Heart right ventricle (tissue), 16 donors: ENCODE measurements at regions of chr9 and their contacts with region 1.

Region 1: DNA sequence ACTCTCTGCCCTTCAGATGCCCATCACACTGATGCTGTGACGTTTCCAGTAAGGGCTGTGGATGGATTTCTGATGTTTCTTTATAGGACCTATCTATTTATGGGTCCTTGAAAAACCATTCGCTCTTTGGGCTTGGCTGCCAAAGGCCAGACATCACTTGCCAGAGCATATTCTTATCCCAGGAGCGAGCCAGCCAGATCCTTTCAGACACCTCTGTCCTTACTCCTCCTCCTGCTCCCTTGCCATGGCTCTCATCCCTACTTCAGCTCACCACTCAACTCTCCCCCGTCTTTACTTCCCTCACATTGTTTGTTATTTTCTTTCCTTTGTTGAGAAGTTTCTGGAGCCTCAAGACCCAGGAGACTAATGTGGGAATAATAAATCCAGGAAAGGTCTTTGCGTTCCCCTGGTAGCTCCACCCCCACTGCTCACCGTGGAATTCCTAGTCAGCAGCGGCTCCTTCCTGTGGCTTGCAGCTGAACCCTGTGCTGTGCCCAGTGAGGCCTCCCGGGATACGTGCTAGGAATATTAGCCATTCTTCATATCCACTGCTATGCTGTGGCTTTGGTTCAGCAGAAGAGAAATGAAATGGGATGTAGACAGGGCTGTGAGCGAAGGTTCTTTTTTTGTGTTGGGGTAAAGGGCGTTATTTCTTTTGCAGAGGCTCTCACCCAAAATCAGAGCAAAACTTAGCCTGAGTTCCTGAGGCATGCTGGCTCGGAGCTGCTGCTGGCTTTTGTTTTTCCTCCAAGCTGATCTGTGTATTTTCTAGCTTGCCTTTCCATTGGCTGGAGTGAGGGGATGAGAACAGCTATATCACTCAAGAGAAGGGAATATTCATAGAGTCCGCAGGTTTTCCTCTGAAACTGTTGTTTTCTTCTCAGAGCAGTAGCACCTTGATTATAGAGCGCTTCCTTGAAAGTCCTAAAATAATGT is 171.1 kb downstream of the SAXO1 start:
- DNase-seq: peak; percentile 28 to 60
- ATAC-seq: peak; percentile 74 to 96 (median 88)
- H3K4me3 ChIP-seq: peak overlapping the region in 2 of 10 donors; percentile 6 to 14
- H3K27ac ChIP-seq: peak overlapping the region in 7 of 10 donors; percentile 17 to 76 (median 44)
- H3K4me1 ChIP-seq: peaks cover 7 to 25% (median 21%) of the 10 kb centered on the region in 9 donors
- H3K27me3 ChIP-seq: no peaks in the 10 kb centered on the region
- CTCF ChIP-seq: peak in 7 of 9 donors; percentile 6 to 57 (median 26)

Region 2: GRCh38 chr9:17962747-17963146 is 899.1 kb before region 1 on chr9:
- intact Hi-C with region 1: no loop called
- DNase-seq: peak in 1 of 2 donors; percentile 19
- ATAC-seq: peak in 6 of 8 donors; percentile 59 to 91 (median 78)
- H3K4me3 ChIP-seq: no peak overlapping the region
- H3K27ac ChIP-seq: peak overlapping the region in 1 of 10 donors; percentile 39
- H3K4me1 ChIP-seq: peaks cover 0 to 9% (median 0%) of the 10 kb centered on the region in 9 donors
- H3K27me3 ChIP-seq: no peaks in the 10 kb centered on the region
- CTCF ChIP-seq: no peak

Region 3: DNA sequence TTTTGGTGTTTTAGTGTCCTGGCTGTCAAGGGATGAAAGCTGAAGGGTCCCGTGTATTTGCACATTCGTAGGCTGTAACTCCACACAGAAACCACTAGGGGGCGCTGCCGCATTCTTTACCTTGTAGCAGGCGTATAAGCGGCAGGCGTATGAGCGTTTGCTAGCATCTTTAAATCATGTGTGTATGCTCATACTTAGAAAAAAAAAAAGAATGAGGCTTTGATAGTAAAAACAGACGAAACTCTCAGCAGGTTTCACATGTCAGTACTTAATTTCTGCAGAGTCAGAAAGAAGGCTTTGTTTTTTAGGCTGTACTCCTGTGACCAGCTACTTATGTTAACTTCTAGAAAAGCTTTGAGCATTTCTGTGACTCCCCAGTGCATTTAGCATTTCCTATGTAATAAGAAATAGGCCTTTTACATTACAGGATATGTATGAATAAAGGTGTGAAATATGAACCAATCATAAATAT is 606.7 kb before region 1 on chr9:
- intact Hi-C with region 1: loop called in 1 of 10 experiments (anchors 10 kb)
- DNase-seq: peak; percentile 70 to 83
- ATAC-seq: peak; percentile 47 to 91 (median 84)
- H3K4me3 ChIP-seq: no peak overlapping the region
- H3K27ac ChIP-seq: no peak overlapping the region
- H3K4me1 ChIP-seq: peaks cover 0 to 21% (median 4%) of the 10 kb centered on the region in 9 donors
- H3K27me3 ChIP-seq: no peaks in the 10 kb centered on the region
- CTCF ChIP-seq: peak; percentile 88 to 98 (median 97)

Region 4: GRCh38 chr9:18632632-18633403 is 229.1 kb before region 1 on chr9:
- intact Hi-C with region 1: no loop called
- DNase-seq: peak; percentile 15 to 41
- ATAC-seq: peak; percentile 80 to 95 (median 94)
- H3K4me3 ChIP-seq: no peak overlapping the region
- H3K27ac ChIP-seq: peak overlapping the region; percentile 12 to 80 (median 72)
- H3K4me1 ChIP-seq: peaks cover 0 to 51% (median 11%) of the 10 kb centered on the region in 9 donors
- H3K27me3 ChIP-seq: no peaks in the 10 kb centered on the region
- CTCF ChIP-seq: no peak

Region 5: GRCh38 chr9:18786911-18787650 is 74.8 kb before region 1 on chr9:
- intact Hi-C with region 1: loop called in 1 of 10 experiments (anchors 10 kb)
- DNase-seq: no peak
- ATAC-seq: peak in 6 of 8 donors; percentile 16 to 59 (median 46)
- H3K4me3 ChIP-seq: no peak overlapping the region
- H3K27ac ChIP-seq: peak overlapping the region in 9 of 10 donors; percentile 30 to 91 (median 78)
- H3K4me1 ChIP-seq: peaks cover 3 to 58% (median 34%) of the 10 kb centered on the region in 9 donors
- H3K27me3 ChIP-seq: no peaks in the 10 kb centered on the region
- CTCF ChIP-seq: no peak

Region 6: GRCh38 chr9:18947772-18948391 is 86.0 kb after region 1 on chr9:
- intact Hi-C with region 1: loop called in 1 of 10 experiments (anchors 10 kb)
- DNase-seq: no peak
- ATAC-seq: no peak
- H3K4me3 ChIP-seq: no peak overlapping the region
- H3K27ac ChIP-seq: no peak overlapping the region
- H3K4me1 ChIP-seq: peaks cover 0 to 6% (median 3%) of the 10 kb centered on the region in 9 donors
- H3K27me3 ChIP-seq: peaks cover 0 to 5% (median 0%) of the 10 kb centered on the region in 7 donors
- CTCF ChIP-seq: no peak